H1 (cell line): ENCODE measurements at regions of chr1 and their contacts with region 1.

Region 1: DNA sequence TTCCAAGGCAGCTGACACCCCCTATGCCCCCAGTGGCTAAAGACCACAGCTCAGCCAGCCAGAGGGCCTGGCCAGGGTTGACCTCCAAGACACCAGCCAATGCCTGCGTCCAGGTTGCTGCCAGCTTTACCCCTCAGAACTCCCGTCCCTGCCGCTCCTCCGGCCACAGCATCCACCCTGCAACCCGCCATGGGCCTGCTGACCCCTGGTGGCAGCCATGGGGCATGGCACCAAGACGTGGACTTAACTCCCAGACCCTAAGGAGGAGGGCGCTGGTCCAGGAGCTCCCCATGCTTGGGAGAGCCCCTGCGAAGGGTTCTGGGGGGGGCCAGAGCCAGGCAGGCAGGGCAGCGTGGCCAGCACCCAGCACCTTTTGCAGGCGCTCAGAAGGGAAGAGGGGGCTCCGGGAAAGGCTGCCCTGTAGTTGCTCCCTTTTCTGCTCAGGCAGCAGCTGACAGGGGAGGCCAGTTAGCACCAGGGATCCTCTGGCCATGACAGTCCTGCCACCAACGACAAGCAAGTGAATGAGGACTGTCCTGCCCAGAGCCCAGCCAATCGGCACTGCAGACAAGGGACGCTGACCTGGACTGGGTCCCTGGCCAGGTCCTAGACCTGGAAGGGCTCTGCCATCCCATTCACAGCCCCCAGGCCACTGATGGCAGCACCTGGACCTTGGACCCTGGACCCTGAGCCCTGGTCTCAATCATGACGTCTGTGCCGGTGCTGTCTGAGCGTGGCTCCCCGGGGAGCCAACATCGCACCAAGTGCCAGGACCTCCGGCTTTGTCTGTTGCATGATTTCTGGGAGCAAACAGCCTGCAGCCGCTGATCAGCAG is 246.2 kb downstream of the NPHP4 start:
- DNase-seq: peak; percentile 70 to 92
- H3K4me3 ChIP-seq: no peak overlapping the region
- H3K27ac ChIP-seq: no peak overlapping the region
- H3K4me1 ChIP-seq: peaks cover 4 to 16% (median 10%) of the 10 kb centered on the region in 4 experiments
- H3K27me3 ChIP-seq: no peaks in the 10 kb centered on the region
- CTCF ChIP-seq: peak; percentile 97 to 99 (median 98)
- EP300 ChIP-seq: no peak; a peak in 1 of 3 replicates
- POLR2A ChIP-seq: no peak
- RAD21 ChIP-seq: peak; percentile 96 to 100

Region 2: GRCh38 chr1:5514519-5515183 is 231.3 kb before region 1 on chr1:
- CTCF ChIA-PET with region 1: interaction called, 47 read pairs
- POLR2A ChIA-PET with region 1: no interaction called
- DNase-seq: peak; percentile 9 to 94
- H3K4me3 ChIP-seq: no peak overlapping the region
- H3K27ac ChIP-seq: no peak overlapping the region
- H3K4me1 ChIP-seq: 0 out of 7 replicates have a peak, but pooled peaks cover 0 to 2% (median 0%) of the 10 kb centered on the region in 4 experiments
- H3K27me3 ChIP-seq: no peaks in the 10 kb centered on the region
- CTCF ChIP-seq: peak; percentile 86 to 99 (median 97)
- EP300 ChIP-seq: no peak
- POLR2A ChIP-seq: no peak
- RAD21 ChIP-seq: peak; percentile 75 to 83

Region 3: GRCh38 chr1:5637171-5637570 is 108.8 kb before region 1 on chr1:
- CTCF ChIA-PET with region 1: interaction called, 57 read pairs
- POLR2A ChIA-PET with region 1: no interaction called
- DNase-seq: no peak
- H3K4me3 ChIP-seq: no peak overlapping the region
- H3K27ac ChIP-seq: no peak overlapping the region
- H3K4me1 ChIP-seq: 0 out of 7 replicates have a peak, but pooled peaks cover 0 to 2% (median 0%) of the 10 kb centered on the region in 4 experiments
- H3K27me3 ChIP-seq: no peaks in the 10 kb centered on the region
- CTCF ChIP-seq: peak; percentile 51 to 66 (median 58)
- EP300 ChIP-seq: no peak
- POLR2A ChIP-seq: no peak
- RAD21 ChIP-seq: peak; percentile 55 to 67

Region 4: GRCh38 chr1:5664906-5665875 is 80.8 kb before region 1 on chr1:
- CTCF ChIA-PET with region 1: interaction called, 10 read pairs
- POLR2A ChIA-PET with region 1: interaction called, 3 read pairs
- DNase-seq: no peak
- H3K4me3 ChIP-seq: no peak overlapping the region
- H3K27ac ChIP-seq: no peak overlapping the region
- H3K4me1 ChIP-seq: no peaks in the 10 kb centered on the region
- H3K27me3 ChIP-seq: no peaks in the 10 kb centered on the region
- CTCF ChIP-seq: no peak
- EP300 ChIP-seq: no peak
- POLR2A ChIP-seq: no peak
- RAD21 ChIP-seq: no peak

Region 5: DNA sequence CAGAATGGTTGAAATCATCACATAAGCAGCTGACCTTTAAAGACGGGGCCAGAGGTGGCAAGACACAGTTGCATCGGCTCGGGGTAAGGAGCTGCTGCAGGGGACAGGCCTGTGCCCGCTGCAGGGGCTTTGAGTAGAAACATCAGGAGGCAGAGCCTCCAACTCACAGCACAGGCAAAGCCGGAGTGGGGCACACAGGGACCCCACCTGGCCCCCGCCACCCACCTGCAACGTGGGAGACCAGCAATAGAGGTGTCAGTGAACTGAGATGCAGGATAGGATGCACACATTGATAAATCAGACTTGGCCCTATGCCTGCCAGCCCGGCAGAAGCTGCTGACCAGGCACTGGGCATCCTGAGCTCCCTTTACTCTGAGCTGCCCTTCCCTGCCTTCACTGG is 11.0 kb before region 1 on chr1:
- CTCF ChIA-PET with region 1: interaction called, 36 read pairs
- POLR2A ChIA-PET with region 1: no interaction called
- DNase-seq: no peak
- H3K4me3 ChIP-seq: no peak overlapping the region
- H3K27ac ChIP-seq: no peak overlapping the region
- H3K4me1 ChIP-seq: no peaks in the 10 kb centered on the region
- H3K27me3 ChIP-seq: no peaks in the 10 kb centered on the region; a peak in 1 of 7 replicates
- CTCF ChIP-seq: no peak
- EP300 ChIP-seq: no peak
- POLR2A ChIP-seq: no peak
- RAD21 ChIP-seq: no peak

Region 6: GRCh38 chr1:5830771-5831599 is 85.0 kb after region 1 on chr1:
- CTCF ChIA-PET with region 1: interaction called, 21 read pairs
- POLR2A ChIA-PET with region 1: no interaction called
- DNase-seq: peak; percentile 73 to 93
- H3K4me3 ChIP-seq: no peak overlapping the region
- H3K27ac ChIP-seq: no peak overlapping the region
- H3K4me1 ChIP-seq: peaks cover 10 to 20% (median 15%) of the 10 kb centered on the region in 4 experiments; a peak in 6 of 7 replicates
- H3K27me3 ChIP-seq: peaks cover 0 to 7% (median 0%) of the 10 kb centered on the region in 4 experiments; a peak in 2 of 7 replicates
- CTCF ChIP-seq: peak; percentile 96 to 99 (median 98)
- EP300 ChIP-seq: 0 out of 3 replicates have a peak, but pooled peaks of 1 of the 2 experiments have one; percentile 21
- POLR2A ChIP-seq: no peak
- RAD21 ChIP-seq: peak; percentile 100

Region 7: GRCh38 chr1:5896706-5897665 is 151.0 kb after region 1 on chr1:
- CTCF ChIA-PET with region 1: no interaction called
- POLR2A ChIA-PET with region 1: no interaction called
- DNase-seq: peak in 1 of 2 experiments; percentile 23
- H3K4me3 ChIP-seq: peak overlapping the region in 2 of 4 experiments; percentile 22 to 47; a peak in 4 of 8 replicates
- H3K27ac ChIP-seq: no peak overlapping the region
- H3K4me1 ChIP-seq: peaks cover 6 to 18% (median 15%) of the 10 kb centered on the region in 4 experiments; a peak in 6 of 7 replicates
- H3K27me3 ChIP-seq: no peaks in the 10 kb centered on the region; a peak in 1 of 7 replicates
- CTCF ChIP-seq: no peak
- EP300 ChIP-seq: no peak
- POLR2A ChIP-seq: no peak
- RAD21 ChIP-seq: no peak